ENCODE measurements at regions of chr3 and their contacts with region 1.

Region 1: DNA sequence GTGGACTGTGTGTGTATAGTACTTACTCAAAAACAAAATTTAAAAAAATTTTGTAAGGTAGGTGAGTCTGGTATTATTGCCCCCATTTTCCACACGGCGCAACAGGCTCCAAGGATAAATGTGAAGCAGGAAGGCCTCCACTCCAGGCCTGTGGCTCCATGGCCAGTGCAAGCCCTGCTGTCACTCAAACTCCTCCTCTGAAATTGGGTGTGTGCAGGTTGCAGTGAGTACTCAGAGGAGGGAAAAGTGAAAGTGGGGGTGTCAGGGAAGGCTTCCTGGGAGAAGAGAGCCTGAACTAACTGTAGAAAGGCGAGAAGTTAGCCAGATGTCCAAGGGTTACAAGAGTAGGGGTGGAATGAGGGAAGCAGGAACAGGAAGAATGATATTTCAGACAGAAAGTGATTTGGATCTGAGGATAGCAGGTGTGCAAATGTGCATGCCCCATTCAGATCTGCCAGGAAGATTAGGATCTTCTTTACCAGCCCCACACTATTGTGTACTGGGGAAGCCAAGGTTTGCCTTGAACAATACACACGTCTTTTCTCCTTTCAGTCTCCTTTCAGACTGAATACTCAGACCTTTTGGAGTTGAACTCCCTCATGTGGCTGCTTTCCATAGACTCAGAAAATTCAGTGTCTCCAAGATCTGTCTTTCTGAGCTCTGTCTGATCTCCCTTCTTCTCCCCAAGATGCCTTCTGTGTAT is 48.7 kb upstream of the RYK start:
- DNase-seq: no peak
- ATAC-seq: peak; percentile 78
- H3K4me3 ChIP-seq: no peak overlapping the region
- H3K27ac ChIP-seq: no peak overlapping the region
- H3K4me1 ChIP-seq: no peaks in the 10 kb centered on the region; the same call in 2 of the 3 replicates
- CTCF ChIP-seq: peak; percentile 20; the same call in 2 of the 3 replicates
- EP300 ChIP-seq: no peak
- POLR2A ChIP-seq: no peak
- RAD21 ChIP-seq: peak; percentile 34 to 39; a peak in 4 of 5 replicates

Region 2: DNA sequence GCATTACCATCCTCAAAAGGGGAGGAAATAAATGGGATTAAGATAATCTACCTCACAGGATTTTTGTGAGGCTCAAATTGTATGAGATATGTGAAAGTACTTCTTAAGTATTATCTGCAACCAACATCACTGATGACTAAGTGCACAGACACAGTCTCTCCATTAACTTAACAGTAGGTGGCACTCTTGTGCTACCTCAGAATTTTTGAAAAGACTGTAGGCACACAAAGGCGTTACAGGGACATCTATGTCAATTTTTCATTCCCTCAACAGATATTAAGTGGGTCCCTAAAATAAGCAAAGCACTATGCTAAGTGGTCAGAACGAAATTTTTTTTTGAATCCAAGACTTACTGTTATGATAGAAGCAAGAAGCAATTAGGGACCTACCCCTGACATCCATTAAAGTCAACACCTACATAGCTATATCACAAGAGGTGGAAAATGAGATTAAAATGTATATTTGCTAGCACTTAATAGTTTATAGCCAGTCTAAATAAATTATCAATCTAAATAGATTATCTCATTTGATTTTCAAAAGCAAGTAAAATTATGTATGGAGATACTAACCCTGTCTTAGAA is 101.6 kb before region 1 on chr3:
- CTCF ChIA-PET with region 1: interaction called, 16 read pairs
- POLR2A ChIA-PET with region 1: no interaction called
- DNase-seq: peak; percentile 44 to 62
- ATAC-seq: peak; percentile 92
- H3K4me3 ChIP-seq: no peak overlapping the region
- H3K27ac ChIP-seq: no peak overlapping the region
- H3K4me1 ChIP-seq: no peaks in the 10 kb centered on the region
- CTCF ChIP-seq: peak; percentile 66
- EP300 ChIP-seq: no peak
- POLR2A ChIP-seq: no peak
- RAD21 ChIP-seq: peak; percentile 50 to 64; a peak in 4 of 5 replicates